ENCODE measurements at regions of chr11 and their contacts with region 1.

Region 1: GRCh38 chr11:26276798-26277424 is 55.0 kb upstream of the ANO3 start:
- DNase-seq: peak in 18 of 35 experiments; percentile 0 to 49 (median 8)
- ATAC-seq: no peak
- H3K4me3 ChIP-seq: no peak overlapping the region
- H3K4me3 Mint-ChIP-seq: no peak overlapping the region
- H3K27ac ChIP-seq: no peak overlapping the region
- H3K27ac Mint-ChIP-seq: no peak overlapping the region
- H3K4me1 ChIP-seq: no peaks in the 10 kb centered on the region
- H3K4me1 Mint-ChIP-seq: no peaks in the 10 kb centered on the region
- H3K27me3 ChIP-seq: no peaks in the 10 kb centered on the region
- H3K27me3 Mint-ChIP-seq: peaks cover 0 to 13% of the 10 kb centered on the region in 2 donors

Region 2: GRCh38 chr11:26297189-26297975 is 20.5 kb after region 1 on chr11:
- CTCF ChIA-PET with region 1: no interaction called
- POLR2A ChIA-PET with region 1: interaction called in 1 of 2 experiments, 17 read pairs
- DNase-seq: peak in 1 of 35 experiments; percentile 8
- ATAC-seq: no peak
- H3K4me3 ChIP-seq: no peak overlapping the region
- H3K4me3 Mint-ChIP-seq: no peak overlapping the region
- H3K27ac ChIP-seq: no peak overlapping the region
- H3K27ac Mint-ChIP-seq: no peak overlapping the region
- H3K4me1 ChIP-seq: no peaks in the 10 kb centered on the region
- H3K4me1 Mint-ChIP-seq: no peaks in the 10 kb centered on the region
- H3K27me3 ChIP-seq: no peaks in the 10 kb centered on the region
- H3K27me3 Mint-ChIP-seq: peaks cover 4% of the 10 kb centered on the region in 2 donors

Region 3: DNA sequence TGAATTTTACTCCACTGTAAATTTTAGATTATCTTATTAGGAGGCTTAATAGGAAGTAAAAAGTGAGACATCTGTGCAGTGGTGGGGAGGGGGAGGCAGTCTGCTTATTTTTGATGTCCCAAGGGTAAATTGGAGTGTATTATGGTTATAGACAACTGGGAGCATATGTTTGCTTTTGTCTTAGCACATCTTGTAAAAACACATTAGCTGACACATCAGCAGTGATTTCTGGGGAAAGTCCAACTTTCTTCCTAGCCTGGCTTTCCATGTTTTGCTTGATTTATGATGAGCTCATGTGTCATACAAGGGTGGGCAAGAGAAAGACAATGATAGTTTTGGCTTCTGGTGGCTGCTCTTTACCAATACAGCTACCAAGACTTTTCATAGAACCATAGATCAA is 59.0 kb after region 1 on chr11:
- CTCF ChIA-PET with region 1: no interaction called
- POLR2A ChIA-PET with region 1: no interaction called
- DNase-seq: no peak
- ATAC-seq: no peak
- H3K4me3 ChIP-seq: no peak overlapping the region
- H3K4me3 Mint-ChIP-seq: no peak overlapping the region
- H3K27ac ChIP-seq: no peak overlapping the region
- H3K27ac Mint-ChIP-seq: no peak overlapping the region
- H3K4me1 ChIP-seq: no peaks in the 10 kb centered on the region
- H3K4me1 Mint-ChIP-seq: no peaks in the 10 kb centered on the region
- H3K27me3 ChIP-seq: no peaks in the 10 kb centered on the region
- H3K27me3 Mint-ChIP-seq: peaks cover 6 to 7% of the 10 kb centered on the region in 2 donors

Measured in T-cell (primary cell).